Ascending aorta (tissue), 2 donors: ENCODE measurements at regions of chr4 and their contacts with region 1.

Region 1: GRCh38 chr4:145481164-145481941 is at the start of gene SMAD1:
- DNase-seq: peak in 1 of 2 donors; percentile 89
- H3K4me3 ChIP-seq: peak within 1 kb of the TSS; percentile 96 to 99
- H3K27ac ChIP-seq: peak within 1 kb of the TSS; percentile 97
- H3K4me1 ChIP-seq: no peaks in the 10 kb centered on the region
- H3K27me3 ChIP-seq: no peaks in the 10 kb centered on the region
- CTCF ChIP-seq: no peak
- total RNA-seq, gene SMAD1: 20.1 TPM

Region 2: DNA sequence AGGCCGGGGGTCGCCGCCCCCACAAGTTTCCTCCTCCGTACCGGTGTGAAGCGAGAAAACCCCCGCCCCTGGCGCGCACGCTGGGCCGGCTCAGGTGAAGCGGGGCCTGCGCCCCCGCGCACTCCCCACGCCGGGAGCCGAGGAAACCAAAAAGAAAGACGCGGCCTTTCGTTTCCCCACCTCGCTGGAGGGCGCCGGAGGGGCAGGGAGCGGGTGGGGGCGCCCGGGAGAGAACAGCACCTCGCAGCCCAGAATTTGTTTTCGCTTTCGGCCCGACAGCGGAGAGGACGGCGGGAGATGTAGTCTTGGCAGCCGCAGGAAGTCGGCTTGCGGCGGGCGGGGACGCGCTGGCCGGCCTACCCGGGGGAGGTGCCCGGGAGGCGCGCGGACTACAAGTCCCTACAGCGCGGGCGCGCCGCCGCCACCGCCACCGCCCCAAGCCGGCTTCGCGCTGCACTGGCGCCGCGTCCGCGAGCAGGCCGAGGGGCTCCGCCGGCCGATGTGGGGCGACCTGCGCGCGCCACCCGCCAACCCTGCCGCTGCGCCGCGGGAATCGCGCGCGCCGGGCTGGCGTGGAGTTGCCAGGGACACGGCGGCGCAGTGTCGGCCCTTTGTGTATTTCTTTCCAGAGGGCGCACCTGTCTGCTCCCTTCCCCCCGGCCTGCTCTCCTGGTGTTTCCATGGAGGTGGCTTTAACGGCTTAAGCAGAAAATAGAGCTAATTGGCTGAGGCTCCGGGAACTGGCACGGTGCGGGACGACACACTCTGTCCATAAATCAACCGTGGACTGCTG is 300.9 kb before region 1 on chr4 and contains the start of gene OTUD4:
- intact Hi-C with region 1: loop called (anchors 2 kb)
- DNase-seq: peak; percentile 84 to 98
- H3K4me3 ChIP-seq: peak within 1 kb of the TSS; percentile 91 to 93
- H3K27ac ChIP-seq: peak within 1 kb of the TSS; percentile 94 to 99
- H3K4me1 ChIP-seq: peaks cover 0 to 14% of the 10 kb centered on the region in 2 donors
- H3K27me3 ChIP-seq: no peaks in the 10 kb centered on the region
- CTCF ChIP-seq: peak in 2 of 3 experiments; percentile 13 to 23
- total RNA-seq, gene OTUD4: 81.4 TPM

Region 3: GRCh38 chr4:145887241-145887991 is 406.1 kb after region 1 on chr4:
- intact Hi-C with region 1: loop called (anchors 10 kb)
- DNase-seq: no peak
- H3K4me3 ChIP-seq: peak overlapping the region in 1 of 2 donors; percentile 12
- H3K27ac ChIP-seq: peak overlapping the region; percentile 78 to 81
- H3K4me1 ChIP-seq: peaks cover 5 to 16% of the 10 kb centered on the region in 2 donors
- H3K27me3 ChIP-seq: no peaks in the 10 kb centered on the region
- CTCF ChIP-seq: peak in 1 of 3 experiments; percentile 28